A549 (cell line): ENCODE measurements at regions of chr10 and their contacts with region 1.

Region 1: DNA sequence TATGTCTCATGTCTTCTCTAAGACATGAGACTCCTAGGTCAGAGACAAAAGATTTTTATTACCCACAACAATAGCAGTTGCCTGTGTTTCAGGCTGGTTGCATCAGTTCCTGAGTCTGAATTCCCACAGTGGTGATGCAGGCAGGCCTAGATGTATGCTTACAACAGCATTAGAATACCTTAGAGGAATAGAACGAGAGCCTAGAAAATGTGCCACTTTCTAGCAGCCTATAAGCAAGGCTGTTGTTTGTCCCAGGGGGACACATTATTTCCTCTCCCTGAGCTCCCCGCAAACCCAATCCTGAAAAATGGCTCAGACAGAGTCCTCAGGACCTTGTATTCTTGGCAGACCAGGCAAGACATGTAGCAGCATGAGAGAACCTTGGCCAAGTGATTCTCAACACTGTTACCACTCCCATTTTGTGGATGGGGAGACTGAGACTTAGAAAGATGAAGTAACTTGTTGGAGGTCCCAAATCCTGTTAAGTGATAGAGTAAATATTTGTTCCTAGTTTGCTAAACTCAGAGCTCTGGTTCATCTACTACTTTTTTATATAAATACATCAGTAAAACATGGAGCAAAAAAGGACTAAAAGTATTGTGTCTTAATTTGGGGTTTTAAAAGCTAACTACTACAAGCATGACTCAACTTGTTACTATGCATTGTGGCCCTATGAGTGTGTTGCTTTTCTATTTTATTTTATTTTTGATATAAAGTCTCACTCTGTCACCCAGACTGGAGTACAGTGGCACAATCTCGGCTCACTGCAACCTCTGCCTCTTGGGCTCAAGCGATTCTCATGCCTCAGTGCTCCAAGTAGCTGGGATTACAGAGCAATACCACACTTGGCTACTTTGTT is 14.2 kb downstream of the VTI1A start:
- DNase-seq: peak in 1 of 2 experiments; percentile 48
- ATAC-seq: peak in 1 of 2 experiments; percentile 94; a peak in 3 of 6 replicates
- H3K4me3 ChIP-seq: no peak overlapping the region
- H3K27ac ChIP-seq: peak overlapping the region; percentile 60 to 71
- H3K4me1 ChIP-seq: peaks cover 12% of the 10 kb centered on the region; the same call in 1 of the 3 replicates
- CTCF ChIP-seq: no peak
- EP300 ChIP-seq: peak in 1 of 2 experiments; percentile 38; a peak in 1 of 5 replicates
- POLR2A ChIP-seq: no peak
- RAD21 ChIP-seq: no peak

Region 2: DNA sequence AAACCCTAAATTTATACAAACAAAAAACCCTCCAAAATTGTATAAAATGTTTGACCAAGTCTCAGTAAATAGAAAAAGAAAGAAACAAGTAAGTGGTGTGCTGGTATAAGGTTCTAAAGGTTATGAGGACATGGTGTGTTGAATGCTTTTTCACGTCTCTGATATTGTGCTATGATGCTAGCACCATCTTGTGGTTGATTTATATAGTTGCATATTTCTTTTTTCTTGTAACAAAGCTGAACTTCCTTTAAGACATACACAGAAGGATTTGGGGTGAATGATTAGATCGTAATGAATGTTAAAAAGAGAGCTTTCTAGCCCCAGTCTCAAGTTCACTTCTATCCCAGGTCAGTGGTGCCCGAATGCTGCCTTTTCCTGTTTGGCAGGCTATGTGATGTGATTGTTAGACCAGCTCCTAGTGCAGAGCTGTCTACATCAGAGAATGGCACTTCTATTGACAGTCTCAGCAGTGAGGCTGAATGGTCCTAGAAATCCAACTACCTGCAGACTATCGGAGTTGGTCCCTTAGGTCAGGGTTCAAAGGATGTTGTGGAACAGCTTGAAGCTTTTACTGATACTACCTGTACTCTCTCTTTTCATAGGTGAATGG is 10.7 kb after region 1 on chr10:
- CTCF ChIA-PET with region 1: interaction called, 29 read pairs
- POLR2A ChIA-PET with region 1: no interaction called
- DNase-seq: peak; percentile 55 to 71
- ATAC-seq: peak; percentile 79 to 85
- H3K4me3 ChIP-seq: no peak overlapping the region
- H3K27ac ChIP-seq: peak overlapping the region in 1 of 2 experiments; percentile 42; a peak in 2 of 6 replicates
- H3K4me1 ChIP-seq: peaks cover 14% of the 10 kb centered on the region; the same call in 2 of the 3 replicates
- CTCF ChIP-seq: peak; percentile 89
- EP300 ChIP-seq: no peak
- POLR2A ChIP-seq: no peak
- RAD21 ChIP-seq: peak; percentile 74